ENCODE measurements at regions of chr20 and their contacts with region 1.

Region 1: GRCh38 chr20:1830240-1830639 is 65.0 kb upstream of the SIRPA start:
- DNase-seq: peak; percentile 87

Region 2: GRCh38 chr20:1894951-1895673 is 64.9 kb after region 1 on chr20 and contains the start of gene SIRPA:
- intact Hi-C with region 1: loop called (anchors 5 kb)
- DNase-seq: peak; percentile 88
- total RNA-seq, gene SIRPA: 45.8 TPM